ENCODE measurements at regions of chr2 and their contacts with region 1.

Region 1: DNA sequence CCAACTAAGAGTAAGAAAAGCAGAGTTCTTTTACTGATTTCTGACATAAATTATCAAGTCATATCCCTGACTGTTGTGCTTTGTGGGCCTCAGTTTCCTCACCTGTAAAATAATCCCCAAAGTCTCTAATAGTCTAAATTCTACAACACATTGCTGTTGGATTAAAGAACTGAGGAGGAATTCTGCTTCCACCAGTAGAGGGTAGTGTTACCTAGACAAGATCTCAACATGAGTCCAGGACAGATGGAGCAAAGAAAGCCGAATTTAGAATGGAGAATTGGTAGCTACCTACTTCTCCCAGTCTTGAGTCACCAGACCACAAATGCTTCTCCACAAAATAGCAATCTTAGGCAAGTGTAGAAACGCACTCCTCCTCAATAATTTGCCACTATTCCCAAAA is 462.5 kb upstream of the FSHR start:
- DNase-seq: no peak
- ATAC-seq: no peak
- H3K4me3 ChIP-seq: no peak overlapping the region
- H3K27ac ChIP-seq: no peak overlapping the region
- H3K4me1 ChIP-seq: no peaks in the 10 kb centered on the region
- H3K27me3 ChIP-seq: no peaks in the 10 kb centered on the region

Region 2: DNA sequence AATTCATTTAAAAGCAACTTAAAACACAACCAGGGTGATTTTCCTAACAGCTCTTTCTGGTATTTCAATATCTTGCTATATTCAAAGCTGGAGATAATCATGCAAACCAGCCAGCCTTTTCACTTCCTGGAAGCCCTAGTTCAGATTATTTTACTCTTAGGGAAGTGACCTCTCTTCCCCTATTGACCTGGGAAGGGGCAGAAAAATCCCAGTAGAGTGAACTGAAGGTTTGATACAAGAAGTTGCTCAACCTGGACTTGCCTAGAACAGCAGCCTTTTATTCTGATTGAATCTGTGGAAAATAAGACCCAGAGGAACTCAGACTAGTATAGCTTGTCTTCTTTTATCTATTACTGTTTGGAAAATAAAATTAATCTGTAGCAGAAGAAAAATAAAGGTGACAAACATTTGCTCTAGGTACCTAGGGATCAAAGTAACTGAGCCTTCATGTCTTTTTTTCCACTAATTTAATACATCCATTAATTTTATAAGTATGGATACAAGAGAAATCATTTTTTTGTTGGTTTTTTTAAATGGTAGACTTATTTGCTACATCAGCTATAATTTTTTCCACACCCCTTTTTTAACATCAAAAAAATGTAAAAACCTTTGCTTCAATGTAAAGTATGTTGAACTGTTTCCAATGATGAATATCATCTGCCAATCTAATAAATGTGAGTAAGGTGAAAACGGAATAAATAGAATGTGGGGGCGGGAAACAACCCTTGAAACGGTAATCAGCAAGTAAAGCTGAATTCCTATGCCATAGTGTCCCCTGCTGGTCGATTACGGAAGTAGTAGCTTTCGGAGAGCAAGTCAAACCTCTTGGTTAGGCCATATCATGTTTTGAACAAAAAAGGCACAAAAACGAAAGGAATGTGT is 785.2 kb after region 1 on chr2:
- intact Hi-C with region 1: loop called in 1 of 4 experiments (anchors 10 kb)
- DNase-seq: peak in 1 of 3 donors; percentile 16
- ATAC-seq: peak; percentile 41 to 70
- H3K4me3 ChIP-seq: no peak overlapping the region
- H3K27ac ChIP-seq: no peak overlapping the region
- H3K4me1 ChIP-seq: no peaks in the 10 kb centered on the region
- H3K27me3 ChIP-seq: no peaks in the 10 kb centered on the region

Measured in right cardiac atrium (tissue), 5 donors.